ENCODE measurements at regions of chr9 and their contacts with region 1.

Region 1: GRCh38 chr9:73183917-73184861 is 32.5 kb downstream of the ANXA1 start:
- DNase-seq: no peak
- ATAC-seq: no peak
- H3K4me3 ChIP-seq: no peak overlapping the region
- H3K4me1 ChIP-seq: no peaks in the 10 kb centered on the region
- CTCF ChIP-seq: no peak

Region 2: DNA sequence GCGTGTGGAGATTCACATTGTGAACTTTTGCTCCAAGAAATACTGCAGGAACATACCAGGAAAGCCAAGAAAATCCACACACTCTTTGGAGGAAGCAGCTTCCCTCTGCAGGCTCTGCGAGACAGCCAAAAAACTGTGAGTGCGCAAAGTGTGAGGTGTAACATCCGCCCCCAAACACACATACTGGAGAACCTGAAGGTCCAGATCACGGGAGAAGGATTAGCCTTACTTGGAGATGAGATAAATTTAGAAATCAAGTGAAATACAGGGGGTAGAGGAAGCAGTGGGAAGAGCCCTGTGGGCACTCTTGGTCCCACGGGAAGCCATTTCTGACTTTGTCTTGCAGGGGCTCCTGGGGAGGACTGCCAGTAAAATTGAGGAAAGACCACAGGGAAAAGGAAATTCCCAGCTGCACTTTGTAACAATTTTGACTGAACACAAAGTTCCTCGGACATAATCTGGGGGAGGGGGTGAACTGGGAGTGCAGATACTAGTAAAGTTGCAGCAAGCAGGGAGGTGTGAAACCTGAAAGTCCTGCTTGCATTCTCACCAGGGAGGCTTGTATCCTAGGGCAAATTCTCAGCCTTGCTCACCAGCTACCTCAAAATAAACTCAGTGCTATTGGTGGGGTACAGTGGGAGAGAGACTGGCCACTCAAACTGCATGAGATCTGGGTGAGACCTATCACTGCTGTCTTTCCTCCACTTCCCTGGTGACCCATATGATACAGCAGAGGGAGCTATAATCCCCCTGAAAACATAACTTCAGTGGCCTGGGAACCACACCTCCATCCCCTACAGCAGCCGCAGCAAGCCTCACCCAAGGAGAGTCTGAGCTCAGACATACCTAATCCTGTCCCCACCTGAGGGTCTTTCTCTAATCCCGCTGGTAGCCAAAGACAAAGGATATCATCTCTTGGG is 340.4 kb before region 1 on chr9:
- intact Hi-C with region 1: no loop called
- DNase-seq: no peak
- ATAC-seq: peak; percentile 26
- H3K4me3 ChIP-seq: no peak overlapping the region
- H3K4me1 ChIP-seq: no peaks in the 10 kb centered on the region
- CTCF ChIP-seq: no peak

Region 3: GRCh38 chr9:73104921-73105320 is 79.3 kb before region 1 on chr9:
- intact Hi-C with region 1: loop called (anchors 5 kb)
- DNase-seq: no peak
- ATAC-seq: no peak
- H3K4me3 ChIP-seq: no peak overlapping the region
- H3K4me1 ChIP-seq: no peaks in the 10 kb centered on the region
- CTCF ChIP-seq: no peak

Measured in mucosa of descending colon (tissue), 3 donors.